ENCODE measurements at regions of chr6 and their contacts with region 1.

Region 1: DNA sequence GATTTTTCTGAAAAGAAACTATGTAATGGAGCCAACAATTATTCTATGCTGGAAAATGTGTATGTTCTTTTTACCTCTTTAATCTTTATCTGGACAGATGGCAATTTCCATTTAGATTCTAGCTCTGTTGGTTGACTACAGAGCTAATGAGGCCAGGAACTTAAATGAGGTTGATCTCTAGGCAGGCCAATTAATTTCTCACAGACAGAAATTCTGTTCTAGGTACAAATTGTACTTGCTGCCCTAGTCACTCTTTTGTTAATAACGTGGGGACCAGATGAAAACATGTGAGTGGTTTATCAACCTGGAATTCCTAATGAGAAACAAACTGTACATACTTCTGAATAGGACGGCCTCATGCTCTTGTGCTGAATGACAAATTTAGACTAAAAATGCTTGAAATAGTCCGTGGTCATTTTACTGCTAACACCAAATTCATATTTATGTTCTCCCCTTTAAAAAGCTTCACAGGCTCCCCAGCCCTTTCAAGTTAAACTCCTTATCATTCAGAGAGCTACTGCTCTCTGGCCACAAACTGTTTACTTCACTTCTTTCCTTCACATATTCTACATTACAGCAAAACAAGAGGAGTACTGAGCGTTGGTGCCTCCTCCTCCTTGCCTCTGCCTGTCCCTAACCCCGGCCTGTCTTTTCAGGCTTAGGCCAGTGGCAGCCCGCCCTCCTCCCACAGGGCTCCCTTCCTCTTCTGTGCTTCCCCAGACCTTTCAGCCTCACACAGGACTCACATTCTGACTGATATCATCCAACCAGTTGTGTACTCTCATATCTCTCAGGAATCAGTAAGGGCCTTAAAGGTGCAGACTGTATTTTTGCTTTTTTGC is 41.4 kb downstream of the DTNBP1 start:
- DNase-seq: peak; percentile 34 to 63 (median 57)
- H3K4me3 ChIP-seq: peak overlapping the region in 1 of 7 experiments; percentile 26
- H3K27ac ChIP-seq: peak overlapping the region; percentile 36 to 77
- H3K4me1 ChIP-seq: peaks cover 8 to 30% (median 19%) of the 10 kb centered on the region in 4 experiments
- H3K27me3 ChIP-seq: no peaks in the 10 kb centered on the region

Region 2: DNA sequence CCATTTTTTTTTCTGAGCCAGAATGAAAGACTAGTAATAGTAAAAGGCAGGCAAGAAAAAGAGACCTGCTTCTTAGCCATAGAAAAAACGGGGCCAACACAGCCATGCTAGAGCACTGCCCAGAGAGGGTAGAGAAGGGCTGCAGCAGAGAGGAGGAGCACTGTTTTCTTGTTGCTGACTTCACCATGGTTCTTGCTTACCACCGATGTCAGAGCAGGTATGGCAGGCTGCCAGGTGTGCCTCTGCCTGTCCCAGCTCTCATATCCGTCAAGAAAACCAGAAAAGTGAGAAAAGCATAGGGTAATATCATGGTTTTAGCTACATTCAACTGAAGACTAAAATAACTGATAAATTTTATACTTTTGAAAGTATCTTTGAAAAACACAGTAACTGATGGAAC is 19.3 kb before region 1 on chr6:
- CTCF ChIA-PET with region 1: interaction called, 10 read pairs
- POLR2A ChIA-PET with region 1: interaction called, 3 read pairs
- DNase-seq: no peak
- H3K4me3 ChIP-seq: no peak overlapping the region
- H3K27ac ChIP-seq: no peak overlapping the region
- H3K4me1 ChIP-seq: no peaks in the 10 kb centered on the region
- H3K27me3 ChIP-seq: no peaks in the 10 kb centered on the region

Region 3: DNA sequence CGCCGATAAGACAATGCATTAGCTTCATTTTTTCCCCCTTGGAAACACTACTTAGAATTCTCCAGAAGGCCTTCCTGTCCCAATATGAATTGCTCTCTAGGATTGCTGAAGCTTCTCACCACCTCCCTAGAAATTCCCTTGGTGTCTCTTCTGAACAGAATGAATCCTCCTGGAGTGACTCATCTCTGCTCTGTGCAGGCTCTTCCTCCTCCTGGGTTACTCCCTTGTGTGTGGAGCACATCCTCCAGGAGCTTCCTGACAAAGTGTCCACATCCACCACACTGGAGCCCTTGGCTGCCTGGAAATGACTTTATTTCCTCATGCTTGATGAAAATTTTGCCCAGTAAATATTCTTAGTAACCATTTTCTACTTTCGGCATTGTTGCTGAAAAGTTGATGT is 13.0 kb before region 1 on chr6:
- CTCF ChIA-PET with region 1: interaction called, 15 read pairs
- POLR2A ChIA-PET with region 1: interaction called, 3 read pairs
- DNase-seq: no peak
- H3K4me3 ChIP-seq: no peak overlapping the region
- H3K27ac ChIP-seq: no peak overlapping the region
- H3K4me1 ChIP-seq: peaks cover 0 to 7% (median 0%) of the 10 kb centered on the region in 4 experiments
- H3K27me3 ChIP-seq: no peaks in the 10 kb centered on the region